Activated CD8-positive, alpha-beta T cell treated with anti-CD3 and anti-CD28 coated beads, Interleukin-2, amount 10 ng/mL, durations not matched to agents 7 days and 5 days (primary cell): ENCODE measurements at regions of chr9 and their contacts with region 1.

Region 1: GRCh38 chr9:77488439-77489126 is 159.5 kb downstream of the GNA14 start:
- DNase-seq: no peak
- ATAC-seq: peak; percentile 64
- H3K4me3 Mint-ChIP-seq: peak overlapping the region; percentile 72
- H3K27ac Mint-ChIP-seq: peak overlapping the region; percentile 73
- H3K4me1 Mint-ChIP-seq: peaks cover 18% of the 10 kb centered on the region
- H3K27me3 Mint-ChIP-seq: peaks cover 3% of the 10 kb centered on the region

Region 2: DNA sequence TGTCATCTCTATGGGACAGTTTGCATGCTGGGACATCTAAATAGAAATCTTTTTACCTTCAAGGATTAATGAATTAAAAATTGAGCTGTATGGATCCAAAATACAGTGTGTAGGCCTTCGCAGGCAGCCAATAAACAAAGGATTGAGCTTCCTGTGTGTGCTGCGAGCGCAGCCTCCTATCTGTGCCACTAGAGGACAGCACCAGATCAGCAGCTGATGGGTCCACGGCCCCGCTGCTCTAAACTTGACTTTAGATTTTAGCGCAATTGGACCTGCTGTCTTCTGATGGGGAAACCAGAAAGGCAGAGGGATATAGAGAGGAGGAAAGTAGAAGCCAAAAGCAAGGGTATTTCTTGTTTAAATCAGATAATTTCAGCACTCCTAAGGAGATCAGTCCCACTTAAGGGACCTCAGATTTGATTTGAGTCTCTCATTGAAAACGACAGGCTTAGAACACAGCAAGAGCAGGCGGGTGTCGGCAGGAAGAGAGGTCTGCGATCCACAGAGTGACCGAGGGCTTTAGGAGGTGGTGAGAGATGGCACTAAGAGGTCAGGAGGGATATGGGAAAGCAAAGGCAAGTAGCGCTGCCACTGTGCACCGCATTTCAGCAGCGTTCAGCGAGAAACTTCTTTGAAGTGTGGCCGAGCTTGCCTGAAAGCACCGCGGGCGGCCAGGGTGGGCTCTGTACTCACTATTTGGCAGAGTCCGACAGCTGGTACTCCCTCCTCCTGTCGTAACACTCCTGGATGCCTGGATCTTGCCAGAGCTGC is 54.7 kb before region 1 on chr9:
- CTCF ChIA-PET with region 1: interaction called, 47 read pairs
- POLR2A ChIA-PET with region 1: no interaction called
- DNase-seq: peak; percentile 67
- ATAC-seq: peak; percentile 90
- H3K4me3 Mint-ChIP-seq: no peak overlapping the region
- H3K27ac Mint-ChIP-seq: no peak overlapping the region
- H3K4me1 Mint-ChIP-seq: peaks cover 2% of the 10 kb centered on the region
- H3K27me3 Mint-ChIP-seq: no peaks in the 10 kb centered on the region

Region 3: GRCh38 chr9:77464661-77465060 is 23.9 kb before region 1 on chr9:
- CTCF ChIA-PET with region 1: interaction called, 137 read pairs
- POLR2A ChIA-PET with region 1: no interaction called
- DNase-seq: no peak
- ATAC-seq: no peak
- H3K4me3 Mint-ChIP-seq: no peak overlapping the region
- H3K27ac Mint-ChIP-seq: no peak overlapping the region
- H3K4me1 Mint-ChIP-seq: peaks cover 3% of the 10 kb centered on the region
- H3K27me3 Mint-ChIP-seq: peaks cover 3% of the 10 kb centered on the region

Region 4: GRCh38 chr9:77475641-77476473 is 12.7 kb before region 1 on chr9:
- CTCF ChIA-PET with region 1: interaction called, 33 read pairs
- POLR2A ChIA-PET with region 1: interaction called, 3 read pairs
- DNase-seq: peak; percentile 79
- ATAC-seq: peak; percentile 99
- H3K4me3 Mint-ChIP-seq: peak overlapping the region; percentile 53
- H3K27ac Mint-ChIP-seq: peak overlapping the region; percentile 96
- H3K4me1 Mint-ChIP-seq: peaks cover 42% of the 10 kb centered on the region
- H3K27me3 Mint-ChIP-seq: no peaks in the 10 kb centered on the region

Region 5: DNA sequence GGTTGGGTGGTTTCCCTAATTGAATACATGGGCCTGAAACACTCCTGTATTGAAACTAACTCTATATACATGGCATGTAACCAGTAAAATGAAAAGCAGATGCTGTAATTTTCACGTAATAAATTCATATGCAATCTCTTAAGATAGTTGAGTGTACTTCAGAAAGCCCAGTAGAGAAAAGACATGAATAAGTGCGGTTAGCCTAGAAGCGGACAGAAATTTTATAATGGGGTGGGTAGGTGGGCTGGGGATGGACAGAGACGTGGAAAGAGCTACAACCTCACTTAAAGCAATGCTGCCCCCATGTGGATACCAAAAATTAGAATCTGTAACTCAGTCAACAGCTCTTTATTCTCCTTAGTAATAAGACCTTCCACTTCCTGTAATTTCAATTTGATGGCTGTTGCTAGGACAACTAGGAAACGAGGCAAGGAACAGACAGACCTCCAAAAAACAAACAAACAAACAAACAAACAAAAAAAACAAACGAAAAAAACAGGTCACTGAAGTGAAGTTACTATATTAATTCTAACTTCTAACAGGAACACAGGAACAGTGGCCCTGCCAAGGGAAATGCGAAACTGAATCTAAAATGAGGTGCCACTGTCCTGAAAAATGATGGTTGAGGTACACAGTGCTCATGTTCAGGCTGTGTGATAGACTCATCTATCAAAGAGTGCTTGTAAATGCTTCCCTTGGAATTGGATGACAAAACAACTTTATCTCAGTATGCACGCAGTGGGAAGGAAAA is 262.9 kb after region 1 on chr9:
- CTCF ChIA-PET with region 1: interaction called, 11 read pairs
- POLR2A ChIA-PET with region 1: no interaction called
- DNase-seq: peak; percentile 29
- ATAC-seq: no peak
- H3K4me3 Mint-ChIP-seq: no peak overlapping the region
- H3K27ac Mint-ChIP-seq: no peak overlapping the region
- H3K4me1 Mint-ChIP-seq: peaks cover 7% of the 10 kb centered on the region
- H3K27me3 Mint-ChIP-seq: no peaks in the 10 kb centered on the region